A549 (cell line): ENCODE measurements at regions of chr2 and their contacts with region 1.

Region 1: GRCh38 chr2:237923481-237924163 is 43.2 kb upstream of the UBE2F start:
- DNase-seq: peak; percentile 66 to 88
- ATAC-seq: peak; percentile 95 to 99
- H3K4me3 ChIP-seq: 0 out of 3 replicates have a peak overlapping the region, but pooled peaks have one; percentile 5
- H3K27ac ChIP-seq: peak overlapping the region; percentile 21 to 76; a peak in 5 of 6 replicates
- H3K4me1 ChIP-seq: peaks cover 5% of the 10 kb centered on the region; the same call in 1 of the 3 replicates
- CTCF ChIP-seq: peak; percentile 91
- EP300 ChIP-seq: no peak
- POLR2A ChIP-seq: no peak
- RAD21 ChIP-seq: peak; percentile 71 to 82

Region 2: DNA sequence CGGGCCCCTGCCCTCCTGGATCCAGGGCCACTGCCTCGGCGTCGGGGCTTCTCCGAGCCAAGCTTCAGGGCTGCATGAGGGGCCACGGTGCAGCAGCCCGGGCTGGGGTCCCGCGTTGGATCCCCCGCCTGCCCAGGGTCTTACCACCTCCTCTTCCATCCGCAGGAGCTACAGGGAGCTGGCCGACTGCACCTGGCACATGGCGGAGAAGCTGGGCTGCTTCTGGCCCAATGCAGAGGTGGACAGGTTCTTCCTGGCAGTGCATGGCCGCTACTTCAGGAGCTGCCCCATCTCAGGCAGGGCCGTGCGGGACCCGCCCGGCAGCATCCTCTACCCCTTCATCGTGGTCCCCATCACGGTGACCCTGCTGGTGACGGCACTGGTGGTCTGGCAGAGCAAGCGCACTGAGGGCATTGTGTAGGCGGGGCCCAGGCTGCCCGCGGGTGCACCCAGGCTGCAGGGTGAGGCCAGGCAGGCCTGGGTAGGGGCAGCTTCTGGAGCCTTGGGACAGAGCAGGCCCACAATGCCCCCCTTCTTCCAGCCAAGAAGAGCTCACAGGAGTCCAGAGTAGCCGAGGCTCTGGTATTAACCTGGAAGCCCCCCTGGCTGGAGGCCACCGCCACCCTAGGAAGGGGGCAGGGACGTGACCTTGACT is 12.1 kb before region 1 on chr2:
- CTCF ChIA-PET with region 1: interaction called, 18 read pairs
- POLR2A ChIA-PET with region 1: no interaction called
- DNase-seq: no peak
- ATAC-seq: peak in 1 of 2 experiments; percentile 21; a peak in 3 of 6 replicates
- H3K4me3 ChIP-seq: no peak overlapping the region
- H3K27ac ChIP-seq: no peak overlapping the region
- H3K4me1 ChIP-seq: no peaks in the 10 kb centered on the region
- CTCF ChIP-seq: no peak
- EP300 ChIP-seq: no peak
- POLR2A ChIP-seq: no peak
- RAD21 ChIP-seq: no peak

Region 3: GRCh38 chr2:237943395-237944094 is 19.9 kb after region 1 on chr2:
- CTCF ChIA-PET with region 1: interaction called, 18 read pairs
- POLR2A ChIA-PET with region 1: no interaction called
- DNase-seq: no peak
- ATAC-seq: no peak
- H3K4me3 ChIP-seq: no peak overlapping the region
- H3K27ac ChIP-seq: no peak overlapping the region
- H3K4me1 ChIP-seq: peaks cover 14% of the 10 kb centered on the region; the same call in 2 of the 3 replicates
- CTCF ChIP-seq: no peak
- EP300 ChIP-seq: no peak
- POLR2A ChIP-seq: no peak
- RAD21 ChIP-seq: no peak